Lower leg skin (tissue), 4 donors: ENCODE measurements at regions of chr3 and their contacts with region 1.

Region 1: DNA sequence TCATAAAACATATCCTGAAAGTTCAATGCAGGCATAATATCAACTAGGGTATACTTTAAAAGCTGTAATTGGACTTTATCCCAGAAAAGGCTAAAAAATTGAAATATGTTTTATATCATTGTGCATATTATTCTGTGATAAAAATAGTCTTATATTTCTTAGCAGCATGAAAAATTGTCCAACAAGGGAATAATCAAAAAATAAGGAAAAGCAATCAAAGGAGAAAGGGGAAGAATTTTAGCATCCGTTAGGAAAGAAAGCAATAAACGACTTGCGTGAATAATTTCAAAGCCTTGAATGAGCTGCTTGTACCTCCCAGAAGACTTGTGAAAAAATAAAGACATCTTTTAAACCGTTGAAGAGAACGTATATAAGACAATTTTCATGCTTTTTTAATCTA is 1369.8 kb upstream of the GBE1 start:
- DNase-seq: no peak
- H3K4me3 ChIP-seq: no peak overlapping the region
- CTCF ChIP-seq: no peak
- POLR2A ChIP-seq: no peak

Region 2: DNA sequence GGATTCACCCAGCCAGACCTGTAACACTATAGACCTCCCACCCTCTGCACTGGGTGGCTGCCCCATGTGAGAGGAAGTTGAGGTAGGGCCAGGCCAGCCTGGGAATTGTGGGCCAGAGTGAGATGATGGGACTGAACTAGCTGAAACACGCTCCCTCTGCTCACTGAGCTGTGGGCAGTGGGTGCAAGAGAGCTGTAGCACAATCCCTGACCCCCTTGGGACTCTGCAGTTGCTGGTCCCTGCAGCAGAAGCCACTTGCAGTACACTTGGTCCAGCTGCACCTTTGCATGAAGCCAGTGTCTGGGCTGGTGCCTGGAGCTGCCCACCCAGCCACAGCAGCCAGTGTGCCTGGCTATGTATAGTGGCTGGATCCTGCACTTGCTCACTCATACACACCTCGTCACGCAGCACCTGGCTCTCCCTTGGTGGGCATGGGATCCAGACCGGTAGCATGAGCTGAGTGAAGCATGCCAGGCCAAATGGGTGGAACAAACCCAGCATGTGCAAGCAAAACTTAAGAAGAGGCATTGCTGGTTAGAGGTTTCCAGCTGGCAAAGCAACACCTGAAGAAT is 564.1 kb before region 1 on chr3:
- intact Hi-C with region 1: no loop called
- DNase-seq: no peak
- H3K4me3 ChIP-seq: no peak overlapping the region
- CTCF ChIP-seq: no peak
- POLR2A ChIP-seq: no peak

Region 3: DNA sequence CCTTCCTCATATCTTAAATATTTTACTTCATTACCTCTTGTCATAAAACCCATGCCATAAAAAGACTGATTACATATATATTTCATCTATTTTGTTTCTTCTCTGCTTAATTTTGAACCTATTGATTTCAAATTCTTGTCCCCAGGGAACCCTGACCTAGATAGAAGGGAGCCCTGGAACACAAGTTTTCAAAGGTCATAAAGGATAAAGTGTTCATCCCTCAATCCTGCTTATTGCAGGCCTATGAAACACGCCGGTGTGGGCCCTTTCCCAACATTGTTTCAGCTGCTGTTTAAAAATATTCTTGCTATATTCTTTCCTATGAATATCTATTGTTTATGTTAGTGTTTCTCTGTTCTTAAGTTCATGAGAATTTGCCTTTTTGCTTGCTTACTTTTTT is 19.7 kb after region 1 on chr3:
- intact Hi-C with region 1: loop called (anchors 2 kb)
- DNase-seq: no peak
- H3K4me3 ChIP-seq: no peak overlapping the region
- CTCF ChIP-seq: no peak
- POLR2A ChIP-seq: no peak

Region 4: GRCh38 chr3:83706669-83707068 is 575.4 kb after region 1 on chr3:
- intact Hi-C with region 1: no loop called
- DNase-seq: no peak
- H3K4me3 ChIP-seq: no peak overlapping the region
- CTCF ChIP-seq: no peak
- POLR2A ChIP-seq: no peak

Region 5: GRCh38 chr3:83729576-83729975 is 598.3 kb after region 1 on chr3:
- intact Hi-C with region 1: no loop called
- DNase-seq: no peak
- H3K4me3 ChIP-seq: no peak overlapping the region
- CTCF ChIP-seq: no peak
- POLR2A ChIP-seq: no peak

Region 6: DNA sequence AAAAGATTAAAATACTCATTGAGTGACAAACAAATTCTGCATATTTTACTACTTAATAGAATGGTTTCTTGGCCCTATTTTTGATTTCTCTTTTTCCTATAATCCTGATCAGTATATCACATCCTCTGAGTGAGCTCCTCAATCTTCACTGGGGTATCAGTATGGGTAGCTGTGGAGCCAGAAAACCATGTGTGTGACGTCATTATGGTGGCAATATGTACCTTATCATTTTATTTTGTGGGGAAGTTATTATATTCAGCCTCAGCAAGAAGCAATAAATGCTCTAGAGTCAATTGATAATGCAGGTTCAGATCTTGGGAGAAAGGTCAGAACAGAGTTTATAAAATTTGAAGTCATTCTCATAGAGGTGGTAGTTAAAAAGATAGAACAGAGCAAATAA is 691.9 kb after region 1 on chr3:
- intact Hi-C with region 1: no loop called
- DNase-seq: no peak
- H3K4me3 ChIP-seq: no peak overlapping the region
- CTCF ChIP-seq: no peak
- POLR2A ChIP-seq: no peak